ENCODE measurements at regions of chr3 and their contacts with region 1.

Region 1: DNA sequence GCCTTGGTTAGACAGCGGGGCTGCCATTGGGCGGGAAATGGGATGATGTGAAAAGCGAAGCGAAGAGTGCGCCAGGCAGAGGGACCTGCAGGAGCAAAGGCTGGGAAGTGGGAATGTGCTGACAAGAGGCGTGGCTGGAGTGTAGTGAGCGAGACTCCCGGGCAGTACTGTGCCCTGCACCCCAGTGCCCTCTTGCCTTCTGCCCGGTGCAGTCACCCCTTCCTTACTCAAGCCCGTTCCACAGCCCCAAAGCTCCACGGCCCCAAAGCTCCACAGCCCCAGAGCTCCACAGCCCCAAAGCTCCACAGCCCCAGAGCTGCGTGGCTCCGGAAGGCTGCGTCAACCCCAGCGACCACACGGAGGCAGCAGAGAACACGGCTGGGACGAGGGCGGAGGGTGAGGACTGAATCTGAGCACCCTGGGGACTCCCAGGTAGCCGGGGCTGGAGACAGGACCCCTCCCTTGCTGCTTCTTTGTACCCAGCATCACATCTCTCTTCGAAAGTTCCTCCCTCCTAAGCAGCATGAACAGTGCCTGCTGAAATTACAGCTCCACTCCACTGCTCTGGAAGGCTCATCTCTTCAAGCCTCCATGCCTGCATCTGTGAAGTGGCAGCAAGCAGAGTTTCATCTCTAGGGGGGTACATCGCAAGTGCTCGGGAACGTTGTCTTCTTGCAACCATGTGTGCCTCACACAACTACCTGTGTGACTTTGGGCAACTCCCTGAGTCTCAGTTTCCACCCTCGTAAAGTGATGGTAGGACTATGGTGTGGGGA is 108.9 kb downstream of the FBLN2 start:
- DNase-seq: no peak

Region 2: GRCh38 chr3:13879655-13880204 is 221.9 kb after region 1 on chr3 and contains the start of gene WNT7A:
- intact Hi-C with region 1: loop called (anchors 2 kb)
- DNase-seq: peak; percentile 54
- total RNA-seq, gene WNT7A: not detected

Region 3: GRCh38 chr3:13884851-13885703 is 227.2 kb after region 1 on chr3:
- intact Hi-C with region 1: loop called (anchors 2 kb)
- DNase-seq: peak; percentile 69

Measured in cardiac septum (tissue), 1 donor.